ENCODE measurements at regions of chr15 and their contacts with region 1.

Region 1: GRCh38 chr15:45346381-45346780 is 32.0 kb downstream of the GATM start:
- DNase-seq: no peak
- H3K4me3 ChIP-seq: no peak overlapping the region
- H3K4me3 Mint-ChIP-seq: peak overlapping the region; percentile 23
- H3K27ac Mint-ChIP-seq: peak overlapping the region; percentile 87
- H3K4me1 ChIP-seq: peaks cover 77% of the 10 kb centered on the region
- H3K4me1 Mint-ChIP-seq: peaks cover 54% of the 10 kb centered on the region
- H3K27me3 ChIP-seq: no peaks in the 10 kb centered on the region
- H3K27me3 Mint-ChIP-seq: no peaks in the 10 kb centered on the region
- CTCF ChIP-seq: no peak

Region 2: GRCh38 chr15:45307230-45307924 is 39.0 kb before region 1 on chr15:
- CTCF ChIA-PET with region 1: interaction called, 3 read pairs
- POLR2A ChIA-PET with region 1: no interaction called
- intact Hi-C with region 1: loop called (anchors 1 kb)
- DNase-seq: peak in 1 of 2 experiments; percentile 29
- H3K4me3 ChIP-seq: no peak overlapping the region
- H3K4me3 Mint-ChIP-seq: peak overlapping the region; percentile 9
- H3K27ac Mint-ChIP-seq: peak overlapping the region; percentile 23
- H3K4me1 ChIP-seq: peaks cover 51% of the 10 kb centered on the region
- H3K4me1 Mint-ChIP-seq: peaks cover 40% of the 10 kb centered on the region
- H3K27me3 ChIP-seq: no peaks in the 10 kb centered on the region
- H3K27me3 Mint-ChIP-seq: no peaks in the 10 kb centered on the region
- CTCF ChIP-seq: peak; percentile 50 to 62

Region 3: DNA sequence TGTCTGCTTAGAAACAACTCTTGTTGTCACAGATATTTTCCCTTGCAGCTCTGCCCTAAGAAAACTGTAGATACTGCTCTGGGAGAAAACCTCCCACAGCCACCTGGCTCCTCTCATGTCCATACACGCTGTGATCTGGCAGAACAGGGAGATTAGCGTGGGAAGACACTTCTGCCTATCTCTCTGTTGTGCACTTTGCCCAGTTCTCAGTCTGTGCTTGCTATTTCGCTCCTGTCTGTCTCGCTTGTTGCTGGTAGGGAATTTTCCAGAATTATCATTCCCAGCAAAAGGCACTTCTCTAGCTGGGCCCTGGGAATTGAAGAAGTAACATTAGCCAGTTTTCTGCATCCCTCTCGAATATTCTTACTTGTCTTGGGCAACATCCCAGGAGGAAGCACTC is 40.0 kb after region 1 on chr15:
- CTCF ChIA-PET with region 1: interaction called, 8 read pairs
- POLR2A ChIA-PET with region 1: no interaction called
- intact Hi-C with region 1: loop called (anchors 2 kb)
- DNase-seq: peak in 1 of 2 experiments; percentile 46
- H3K4me3 ChIP-seq: no peak overlapping the region
- H3K4me3 Mint-ChIP-seq: peak overlapping the region; percentile 3
- H3K27ac Mint-ChIP-seq: no peak overlapping the region
- H3K4me1 ChIP-seq: peaks cover 54% of the 10 kb centered on the region
- H3K4me1 Mint-ChIP-seq: peaks cover 33% of the 10 kb centered on the region
- H3K27me3 ChIP-seq: no peaks in the 10 kb centered on the region
- H3K27me3 Mint-ChIP-seq: no peaks in the 10 kb centered on the region
- CTCF ChIP-seq: no peak

Region 4: GRCh38 chr15:45393851-45394250 is 47.5 kb after region 1 on chr15:
- CTCF ChIA-PET with region 1: no interaction called
- POLR2A ChIA-PET with region 1: no interaction called
- intact Hi-C with region 1: loop called (anchors 2 kb)
- DNase-seq: peak; percentile 48 to 56
- H3K4me3 ChIP-seq: no peak overlapping the region
- H3K4me3 Mint-ChIP-seq: no peak overlapping the region
- H3K27ac Mint-ChIP-seq: peak overlapping the region; percentile 46
- H3K4me1 ChIP-seq: peaks cover 26% of the 10 kb centered on the region
- H3K4me1 Mint-ChIP-seq: peaks cover 7% of the 10 kb centered on the region
- H3K27me3 ChIP-seq: no peaks in the 10 kb centered on the region
- H3K27me3 Mint-ChIP-seq: no peaks in the 10 kb centered on the region
- CTCF ChIP-seq: peak; percentile 35 to 40

Region 5: DNA sequence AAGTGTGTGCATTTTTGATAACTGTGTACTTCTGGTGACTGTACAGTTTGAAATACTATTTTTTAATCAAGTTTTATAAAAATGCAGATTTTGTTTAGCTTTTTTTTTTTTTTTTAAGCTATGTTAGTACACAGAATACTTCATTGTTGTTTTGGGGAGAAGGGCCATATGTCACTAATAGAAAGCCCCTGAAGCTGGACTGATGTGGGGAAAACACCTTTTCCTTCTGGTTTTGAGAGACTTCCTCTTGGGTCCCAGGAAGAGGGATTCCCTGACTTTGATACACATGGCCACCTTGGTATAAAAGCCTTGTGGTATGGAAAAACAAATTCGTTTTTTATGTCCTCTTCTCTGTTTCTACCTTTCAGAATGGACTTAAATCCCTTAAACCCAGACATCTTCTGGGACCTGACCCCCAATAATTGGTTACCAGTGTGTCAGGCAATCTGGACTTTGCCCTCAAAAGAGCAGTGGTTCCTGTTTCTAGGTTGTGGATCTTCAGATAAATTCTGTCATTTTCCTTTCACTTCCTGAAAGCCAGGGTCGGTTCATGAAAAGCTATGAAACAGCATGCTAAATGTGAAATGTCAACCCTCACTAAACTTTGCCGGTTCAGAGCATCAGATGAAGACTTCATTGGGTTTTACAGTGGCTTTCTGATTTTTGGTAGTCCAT is 209.7 kb after region 1 on chr15:
- CTCF ChIA-PET with region 1: no interaction called
- POLR2A ChIA-PET with region 1: no interaction called
- intact Hi-C with region 1: no loop called
- DNase-seq: no peak
- H3K4me3 ChIP-seq: no peak overlapping the region
- H3K4me3 Mint-ChIP-seq: no peak overlapping the region
- H3K27ac Mint-ChIP-seq: no peak overlapping the region
- H3K4me1 ChIP-seq: peaks cover 5% of the 10 kb centered on the region
- H3K4me1 Mint-ChIP-seq: no peaks in the 10 kb centered on the region
- H3K27me3 ChIP-seq: no peaks in the 10 kb centered on the region
- H3K27me3 Mint-ChIP-seq: peaks cover 5% of the 10 kb centered on the region
- CTCF ChIP-seq: no peak

Measured in Caco-2 (cell line).